ENCODE measurements at regions of chrX and their contacts with region 1.

Region 1: DNA sequence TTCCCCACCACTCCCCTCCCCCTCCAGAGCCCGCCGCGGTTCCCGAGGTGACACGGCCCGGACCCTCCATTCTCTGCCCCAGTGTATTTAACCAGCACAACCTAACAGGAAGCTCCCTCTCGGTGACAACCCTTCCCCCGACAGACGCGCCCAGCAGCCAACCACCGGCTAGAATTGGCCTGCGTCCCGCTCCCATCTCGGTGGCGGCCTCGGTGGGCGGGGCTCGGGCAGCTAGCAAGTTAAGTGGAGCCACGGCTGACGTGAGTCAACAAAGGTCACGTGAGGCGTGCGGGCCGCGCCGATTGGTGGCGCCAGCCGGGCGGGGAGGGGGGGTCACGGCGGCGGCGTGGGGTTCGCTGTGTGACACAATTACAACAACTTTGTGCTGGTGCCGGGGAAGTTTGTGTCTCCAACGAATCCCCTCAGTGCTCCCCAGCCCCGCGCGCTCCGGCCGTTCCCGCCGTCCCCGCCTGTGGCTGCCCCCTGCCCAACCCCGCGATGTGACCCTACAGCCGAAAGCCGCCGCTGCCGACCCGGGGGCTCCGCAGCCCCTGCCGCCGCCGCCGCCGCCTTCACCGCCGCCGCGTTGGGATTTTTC is at the start of gene KDM6A:
- DNase-seq: peak; percentile 85 to 99 (median 98)
- ATAC-seq: peak; percentile 94
- H3K4me3 ChIP-seq: peak within 1 kb of the TSS; percentile 89
- H3K4me3 Mint-ChIP-seq: peak within 1 kb of the TSS; percentile 87 to 100 (median 96)
- H3K27ac ChIP-seq: peak within 1 kb of the TSS; percentile 100
- H3K27ac Mint-ChIP-seq: peak within 1 kb of the TSS; percentile 90 to 100 (median 97)
- H3K4me1 ChIP-seq: peaks cover 14 to 15% of the 10 kb centered on the region in 2 donors
- H3K4me1 Mint-ChIP-seq: peaks cover 0 to 46% (median 27%) of the 10 kb centered on the region in 7 donors
- H3K27me3 ChIP-seq: no peaks in the 10 kb centered on the region
- H3K27me3 Mint-ChIP-seq: no peaks in the 10 kb centered on the region
- total RNA-seq, gene KDM6A: 27.8 to 55.6 (median 47.5) TPM

Region 2: DNA sequence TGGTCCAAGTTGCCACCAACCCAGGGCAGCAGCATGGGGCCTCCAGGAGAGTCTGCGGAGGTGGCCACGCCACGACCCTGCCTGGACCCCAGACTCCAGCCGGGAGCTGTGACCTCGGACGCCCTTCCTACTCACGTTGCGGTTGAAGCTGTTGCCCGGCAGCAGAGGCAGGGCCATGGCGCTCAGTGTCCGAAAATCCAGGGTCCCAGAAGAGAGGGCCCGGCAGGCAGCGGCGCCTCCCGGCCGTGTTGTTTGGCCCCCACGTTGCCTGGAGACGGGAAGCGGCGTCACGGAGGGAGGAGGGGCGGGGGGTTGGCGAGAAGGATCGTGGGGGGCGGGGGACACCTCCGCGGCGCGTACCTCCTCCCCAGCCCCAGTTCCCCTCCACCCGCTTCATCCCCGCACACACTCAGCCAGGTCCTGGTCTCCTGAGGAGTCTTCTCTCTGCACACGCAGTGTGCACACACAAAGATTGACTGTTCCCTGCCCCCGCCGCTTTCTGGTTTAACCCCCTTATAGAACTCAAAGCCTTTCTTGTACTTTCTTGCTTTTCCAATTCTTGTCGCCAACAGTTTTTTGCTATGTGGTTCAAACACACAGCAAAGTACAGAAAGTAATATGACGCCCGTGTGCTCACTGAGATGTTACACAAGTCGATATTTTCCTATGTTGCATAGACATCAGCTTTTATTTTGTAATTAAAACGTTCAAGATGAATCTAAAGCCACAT is 529.3 kb before region 1 on chrX and contains the start of gene EFHC2:
- CTCF ChIA-PET with region 1: no interaction called
- POLR2A ChIA-PET with region 1: no interaction called
- intact Hi-C with region 1: loop called in 1 of 2 experiments (anchors 5 kb)
- DNase-seq: peak; percentile 24 to 65 (median 51)
- ATAC-seq: peak; percentile 75
- H3K4me3 ChIP-seq: peak within 1 kb of the TSS; percentile 73
- H3K4me3 Mint-ChIP-seq: peak within 1 kb of the TSS; percentile 85 to 96 (median 92)
- H3K27ac ChIP-seq: peak within 1 kb of the TSS; percentile 84
- H3K27ac Mint-ChIP-seq: peak within 1 kb of the TSS; percentile 92 to 99 (median 96)
- H3K4me1 ChIP-seq: peaks cover 0 to 3% of the 10 kb centered on the region in 2 donors
- H3K4me1 Mint-ChIP-seq: peaks cover 11 to 58% (median 21%) of the 10 kb centered on the region in 7 donors
- H3K27me3 ChIP-seq: no peaks in the 10 kb centered on the region
- H3K27me3 Mint-ChIP-seq: no peaks in the 10 kb centered on the region
- total RNA-seq, gene EFHC2: 0.31 to 2.8 (median 1.7) TPM

Region 3: DNA sequence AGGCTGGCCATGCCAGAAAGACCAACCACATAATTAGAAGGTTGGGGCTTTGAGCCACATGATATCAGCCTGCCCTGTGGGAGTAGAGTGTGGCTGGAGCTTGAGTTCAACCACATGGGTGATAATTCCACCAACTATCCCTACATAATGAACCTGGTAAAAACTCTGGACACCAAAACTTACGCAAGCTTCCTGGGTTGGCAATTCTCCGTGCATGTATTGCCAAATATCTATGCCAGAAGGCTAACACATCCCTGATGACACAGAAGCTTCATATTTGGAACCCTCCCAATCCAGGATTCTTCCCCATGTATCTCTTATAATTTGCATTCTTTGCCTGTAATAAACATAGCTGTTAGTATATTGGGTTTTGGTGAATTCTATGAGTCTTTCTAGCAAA is 398.5 kb before region 1 on chrX:
- CTCF ChIA-PET with region 1: no interaction called
- POLR2A ChIA-PET with region 1: no interaction called
- intact Hi-C with region 1: no loop called
- DNase-seq: no peak
- ATAC-seq: no peak
- H3K4me3 ChIP-seq: no peak overlapping the region
- H3K4me3 Mint-ChIP-seq: no peak overlapping the region
- H3K27ac ChIP-seq: no peak overlapping the region
- H3K27ac Mint-ChIP-seq: no peak overlapping the region
- H3K4me1 ChIP-seq: no peaks in the 10 kb centered on the region
- H3K4me1 Mint-ChIP-seq: peaks cover 0 to under 1% (median 0%) of the 10 kb centered on the region in 7 donors
- H3K27me3 ChIP-seq: no peaks in the 10 kb centered on the region
- H3K27me3 Mint-ChIP-seq: no peaks in the 10 kb centered on the region

Region 4: DNA sequence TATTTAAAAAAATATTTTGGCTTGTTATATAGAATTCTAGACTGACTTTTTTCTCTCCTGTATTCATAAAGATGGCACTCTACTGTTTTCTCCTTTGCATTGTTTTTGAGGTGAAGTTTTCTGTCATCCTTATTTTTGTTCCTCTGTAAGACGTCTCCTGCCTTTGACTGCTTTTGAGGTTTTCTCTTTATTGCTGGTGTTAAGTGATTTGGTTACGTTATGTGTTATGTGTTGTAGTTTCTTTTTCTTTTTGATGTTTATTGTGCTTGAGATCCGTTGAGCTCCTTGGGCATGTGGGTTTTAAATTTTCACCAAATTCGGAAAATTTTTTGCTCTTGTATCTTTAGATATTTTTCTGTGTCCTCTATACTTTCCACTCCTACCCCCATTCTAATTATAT is 50.1 kb after region 1 on chrX:
- CTCF ChIA-PET with region 1: no interaction called
- POLR2A ChIA-PET with region 1: no interaction called
- intact Hi-C with region 1: loop called (anchors 2 to 5 kb)
- DNase-seq: peak in 7 of 9 donors; percentile 14 to 60 (median 36)
- ATAC-seq: peak; percentile 57
- H3K4me3 ChIP-seq: no peak overlapping the region
- H3K4me3 Mint-ChIP-seq: peak overlapping the region; percentile 0 to 73 (median 66)
- H3K27ac ChIP-seq: no peak overlapping the region
- H3K27ac Mint-ChIP-seq: peak overlapping the region; percentile 18 to 84 (median 62)
- H3K4me1 ChIP-seq: peaks cover 0 to 4% of the 10 kb centered on the region in 2 donors
- H3K4me1 Mint-ChIP-seq: peaks cover 18 to 94% (median 64%) of the 10 kb centered on the region in 7 donors
- H3K27me3 ChIP-seq: no peaks in the 10 kb centered on the region
- H3K27me3 Mint-ChIP-seq: no peaks in the 10 kb centered on the region

Region 5: DNA sequence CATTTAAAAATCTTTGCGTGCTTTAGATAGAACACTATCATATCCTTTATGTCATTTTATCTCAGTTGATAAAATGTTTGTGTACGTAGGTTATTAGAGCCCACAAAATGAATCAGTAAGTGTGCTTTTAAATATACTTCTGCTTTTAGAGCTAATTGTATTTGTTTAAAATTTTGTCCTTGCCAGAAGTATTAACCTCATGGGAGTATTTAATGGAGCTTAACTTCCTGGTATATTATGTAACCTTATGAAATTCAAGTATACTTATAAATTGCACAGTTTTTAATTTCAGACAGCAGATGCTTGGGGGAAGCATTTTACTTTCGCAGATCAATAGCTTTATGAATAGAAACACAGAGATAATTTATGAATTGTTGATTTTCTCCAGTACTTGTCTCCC is 237.6 kb after region 1 on chrX:
- CTCF ChIA-PET with region 1: no interaction called
- POLR2A ChIA-PET with region 1: interaction called, 12 read pairs
- intact Hi-C with region 1: no loop called
- DNase-seq: no peak
- ATAC-seq: no peak
- H3K4me3 ChIP-seq: no peak overlapping the region
- H3K4me3 Mint-ChIP-seq: no peak overlapping the region
- H3K27ac ChIP-seq: no peak overlapping the region
- H3K27ac Mint-ChIP-seq: peak overlapping the region in 1 of 9 donors; percentile 12
- H3K4me1 ChIP-seq: no peaks in the 10 kb centered on the region
- H3K4me1 Mint-ChIP-seq: no peaks in the 10 kb centered on the region
- H3K27me3 ChIP-seq: no peaks in the 10 kb centered on the region
- H3K27me3 Mint-ChIP-seq: no peaks in the 10 kb centered on the region

Region 6: GRCh38 chrX:45849253-45849862 is 976.4 kb after region 1 on chrX:
- CTCF ChIA-PET with region 1: no interaction called
- POLR2A ChIA-PET with region 1: no interaction called
- intact Hi-C with region 1: loop called in 1 of 2 experiments (anchors 5 kb)
- DNase-seq: peak in 6 of 9 donors; percentile 10 to 36 (median 22)
- ATAC-seq: peak; percentile 76
- H3K4me3 ChIP-seq: peak overlapping the region; percentile 77
- H3K4me3 Mint-ChIP-seq: peak overlapping the region; percentile 88 to 95 (median 92)
- H3K27ac ChIP-seq: no peak overlapping the region
- H3K27ac Mint-ChIP-seq: peak overlapping the region in 7 of 9 donors; percentile 16 to 91 (median 69)
- H3K4me1 ChIP-seq: no peaks in the 10 kb centered on the region
- H3K4me1 Mint-ChIP-seq: peaks cover 0 to 45% (median 9%) of the 10 kb centered on the region in 7 donors
- H3K27me3 ChIP-seq: no peaks in the 10 kb centered on the region
- H3K27me3 Mint-ChIP-seq: no peaks in the 10 kb centered on the region

Measured in naive thymus-derived CD4-positive, alpha-beta T cell (primary cell).